ENCODE measurements at regions of chr2 and their contacts with region 1.

Region 1: DNA sequence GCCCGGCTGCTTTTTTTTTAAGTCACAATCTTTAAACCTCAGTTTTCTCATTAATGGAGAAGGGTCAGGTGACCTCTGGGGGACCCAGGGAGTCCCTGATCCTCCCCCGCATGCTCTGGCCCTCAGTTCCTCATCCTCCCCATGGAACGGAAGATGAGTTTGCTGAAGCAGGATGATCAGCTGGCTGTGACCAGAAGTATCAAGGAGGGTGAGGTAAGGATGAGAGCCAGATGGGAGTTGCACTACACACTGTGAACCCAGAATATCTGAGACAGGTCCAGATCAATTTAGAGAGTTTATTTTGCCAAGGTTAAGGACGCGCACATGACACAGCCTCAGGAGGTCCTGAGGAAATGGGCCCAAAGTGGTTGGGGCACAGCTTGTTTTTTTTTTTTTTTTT is 3.8 kb downstream of the CATIP start:
- DNase-seq: no peak
- ATAC-seq: no peak
- H3K4me3 ChIP-seq: no peak overlapping the region
- H3K27ac ChIP-seq: no peak overlapping the region
- H3K4me1 ChIP-seq: peaks cover 7% of the 10 kb centered on the region; the same call in 1 of the 2 replicates
- H3K27me3 ChIP-seq: no peaks in the 10 kb centered on the region
- CTCF ChIP-seq: no peak

Region 2: DNA sequence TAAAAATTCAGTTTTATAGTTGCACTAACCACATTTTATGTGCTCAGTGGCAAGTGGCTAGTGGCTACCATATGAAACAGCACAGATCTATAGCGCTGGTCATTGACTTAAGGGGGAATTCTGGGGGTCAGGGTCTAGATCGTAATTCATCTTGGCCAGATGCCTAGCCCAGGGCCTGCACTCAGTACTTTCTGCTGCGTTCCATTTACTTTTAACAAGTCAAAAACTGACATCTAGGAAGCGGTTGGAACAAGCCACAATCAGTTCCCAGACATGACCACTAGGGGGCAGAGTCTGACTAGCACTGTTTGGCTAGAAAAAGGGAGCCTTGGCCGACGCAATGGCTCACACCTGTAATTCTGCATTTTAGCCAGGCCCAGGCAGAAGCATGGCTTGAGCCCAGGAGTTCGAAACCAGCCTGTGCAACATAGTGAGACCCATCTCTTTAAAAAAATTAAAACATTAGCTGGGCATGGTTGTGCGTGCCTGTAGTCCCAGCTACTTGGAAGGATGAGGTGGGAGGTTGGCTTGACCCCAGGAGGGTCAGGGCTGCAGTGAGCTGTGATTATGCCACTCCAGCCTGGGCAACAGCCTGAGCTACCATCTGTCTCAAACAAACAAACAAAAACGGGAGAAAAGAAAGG is 59.1 kb before region 1 on chr2:
- CTCF ChIA-PET with region 1: interaction called, 16 read pairs
- POLR2A ChIA-PET with region 1: no interaction called
- in situ Hi-C with region 1: no loop called
- intact Hi-C with region 1: loop called (anchors 1 kb)
- DNase-seq: peak; percentile 83
- ATAC-seq: peak; percentile 87
- H3K4me3 ChIP-seq: no peak overlapping the region
- H3K27ac ChIP-seq: no peak overlapping the region; the same call in 1 of the 2 replicates
- H3K4me1 ChIP-seq: peaks cover 10% of the 10 kb centered on the region
- H3K27me3 ChIP-seq: no peaks in the 10 kb centered on the region
- CTCF ChIP-seq: peak; percentile 94

Region 3: GRCh38 chr2:218406209-218406948 is 45.9 kb after region 1 on chr2:
- CTCF ChIA-PET with region 1: no interaction called
- POLR2A ChIA-PET with region 1: no interaction called
- in situ Hi-C with region 1: no loop called
- intact Hi-C with region 1: no loop called
- DNase-seq: no peak
- ATAC-seq: peak; percentile 89
- H3K4me3 ChIP-seq: peak overlapping the region; percentile 36 to 61
- H3K27ac ChIP-seq: peak overlapping the region; percentile 95
- H3K4me1 ChIP-seq: peaks cover 51% of the 10 kb centered on the region
- H3K27me3 ChIP-seq: no peaks in the 10 kb centered on the region
- CTCF ChIP-seq: peak; percentile 93

Region 4: DNA sequence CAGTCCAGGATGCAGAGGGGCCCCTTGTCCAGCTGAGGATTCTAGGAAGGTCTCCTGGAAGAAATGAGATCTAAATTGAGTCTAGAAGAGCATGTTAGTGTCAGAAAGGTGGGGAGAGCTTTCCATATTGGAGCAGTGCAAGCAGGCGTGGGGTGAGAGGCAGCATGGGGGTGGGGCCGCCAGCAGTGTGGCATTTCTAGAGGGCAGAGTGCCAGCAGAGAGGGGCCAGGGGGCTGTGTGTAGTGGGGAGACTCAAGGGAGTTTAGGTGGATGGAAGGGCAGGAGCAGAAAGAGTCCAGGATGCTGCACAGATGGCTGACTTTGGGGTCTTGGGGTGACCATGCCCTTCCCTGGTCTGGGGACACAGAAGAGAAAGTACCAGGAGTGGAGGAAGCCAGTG is 60.6 kb after region 1 on chr2:
- CTCF ChIA-PET with region 1: interaction called, 10 read pairs
- POLR2A ChIA-PET with region 1: no interaction called
- in situ Hi-C with region 1: no loop called
- intact Hi-C with region 1: no loop called
- DNase-seq: no peak
- ATAC-seq: no peak
- H3K4me3 ChIP-seq: no peak overlapping the region
- H3K27ac ChIP-seq: no peak overlapping the region
- H3K4me1 ChIP-seq: no peaks in the 10 kb centered on the region
- H3K27me3 ChIP-seq: no peaks in the 10 kb centered on the region
- CTCF ChIP-seq: no peak